MCF 10A (cell line): ENCODE measurements at regions of chr11 and their contacts with region 1.

Region 1: DNA sequence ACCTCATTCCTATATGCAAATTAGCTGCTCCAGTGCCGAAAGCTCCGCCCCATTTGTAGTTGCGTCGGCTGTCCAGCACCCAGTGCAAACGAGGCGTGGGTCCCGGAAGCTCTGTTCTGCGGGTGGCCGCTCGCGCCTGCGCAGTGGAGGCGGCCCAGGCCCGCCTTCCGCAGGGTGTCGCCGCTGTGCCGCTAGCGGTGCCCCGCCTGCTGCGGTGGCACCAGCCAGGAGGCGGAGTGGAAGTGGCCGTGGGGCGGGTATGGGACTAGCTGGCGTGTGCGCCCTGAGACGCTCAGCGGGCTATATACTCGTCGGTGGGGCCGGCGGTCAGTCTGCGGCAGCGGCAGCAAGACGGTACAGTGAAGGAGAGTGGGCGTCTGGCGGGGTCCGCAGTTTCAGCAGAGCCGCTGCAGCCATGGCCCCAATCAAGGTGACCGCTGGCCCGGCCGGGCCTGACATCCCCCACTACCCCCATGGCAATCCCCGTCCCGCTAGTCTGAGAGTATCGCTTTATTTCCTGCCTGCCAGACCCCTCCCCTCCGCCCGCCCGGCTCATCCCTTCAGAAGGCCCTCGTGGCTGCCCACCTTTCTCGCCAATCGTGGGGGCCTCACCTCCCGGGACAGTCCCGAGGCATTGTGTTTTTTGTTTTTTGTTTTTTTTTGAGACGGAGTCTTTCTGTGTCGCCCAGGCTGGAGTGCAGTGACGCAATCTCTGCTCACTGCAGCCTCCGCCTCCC is at the start of gene PRDX5:
- DNase-seq: peak; percentile 96
- H3K4me3 Mint-ChIP-seq: peak within 1 kb of the TSS; percentile 86
- H3K27ac Mint-ChIP-seq: peak within 1 kb of the TSS; percentile 93
- H3K4me1 Mint-ChIP-seq: peaks cover 36% of the 10 kb centered on the region
- H3K27me3 Mint-ChIP-seq: no peaks in the 10 kb centered on the region
- CTCF ChIP-seq: no peak
- total RNA-seq, gene PRDX5: 274 and 302 TPM in 2 replicates

Region 2: DNA sequence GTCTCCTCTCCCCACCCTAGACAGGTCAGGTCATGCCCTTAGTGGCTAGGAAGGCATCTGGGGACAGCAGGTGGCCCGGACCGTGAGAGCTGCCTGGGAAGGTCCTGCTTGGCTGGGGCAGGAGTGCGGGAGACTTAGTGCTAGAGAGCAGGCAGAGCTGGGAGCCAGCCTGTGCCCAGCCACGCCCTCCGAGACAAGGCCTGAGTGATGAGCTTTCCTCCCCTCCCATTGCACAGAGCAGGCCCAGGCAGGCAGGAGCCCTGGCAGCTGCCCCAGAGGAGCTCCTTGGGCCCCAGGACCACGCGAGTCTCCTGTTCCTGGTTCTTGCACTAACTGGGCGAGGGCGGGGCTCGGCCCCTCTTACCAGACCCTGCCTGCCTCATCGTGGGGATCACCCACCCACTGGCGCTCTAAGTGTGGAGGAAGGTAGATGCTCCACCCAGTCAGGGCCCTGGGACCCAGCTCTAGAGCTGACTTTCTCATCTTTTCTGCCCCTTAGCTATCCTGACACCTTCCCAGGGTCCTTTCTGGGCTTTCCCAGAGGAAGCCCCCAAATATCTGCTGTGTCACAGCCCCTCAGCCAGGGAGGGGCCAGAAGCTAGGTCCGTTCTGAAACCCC is 197.1 kb before region 1 on chr11:
- CTCF ChIA-PET with region 1: no interaction called
- POLR2A ChIA-PET with region 1: no interaction called
- intact Hi-C with region 1: no loop called
- DNase-seq: peak; percentile 83
- H3K4me3 Mint-ChIP-seq: peak overlapping the region; percentile 1
- H3K27ac Mint-ChIP-seq: no peak overlapping the region
- H3K4me1 Mint-ChIP-seq: peaks cover 18% of the 10 kb centered on the region
- H3K27me3 Mint-ChIP-seq: no peaks in the 10 kb centered on the region
- CTCF ChIP-seq: no peak

Region 3: DNA sequence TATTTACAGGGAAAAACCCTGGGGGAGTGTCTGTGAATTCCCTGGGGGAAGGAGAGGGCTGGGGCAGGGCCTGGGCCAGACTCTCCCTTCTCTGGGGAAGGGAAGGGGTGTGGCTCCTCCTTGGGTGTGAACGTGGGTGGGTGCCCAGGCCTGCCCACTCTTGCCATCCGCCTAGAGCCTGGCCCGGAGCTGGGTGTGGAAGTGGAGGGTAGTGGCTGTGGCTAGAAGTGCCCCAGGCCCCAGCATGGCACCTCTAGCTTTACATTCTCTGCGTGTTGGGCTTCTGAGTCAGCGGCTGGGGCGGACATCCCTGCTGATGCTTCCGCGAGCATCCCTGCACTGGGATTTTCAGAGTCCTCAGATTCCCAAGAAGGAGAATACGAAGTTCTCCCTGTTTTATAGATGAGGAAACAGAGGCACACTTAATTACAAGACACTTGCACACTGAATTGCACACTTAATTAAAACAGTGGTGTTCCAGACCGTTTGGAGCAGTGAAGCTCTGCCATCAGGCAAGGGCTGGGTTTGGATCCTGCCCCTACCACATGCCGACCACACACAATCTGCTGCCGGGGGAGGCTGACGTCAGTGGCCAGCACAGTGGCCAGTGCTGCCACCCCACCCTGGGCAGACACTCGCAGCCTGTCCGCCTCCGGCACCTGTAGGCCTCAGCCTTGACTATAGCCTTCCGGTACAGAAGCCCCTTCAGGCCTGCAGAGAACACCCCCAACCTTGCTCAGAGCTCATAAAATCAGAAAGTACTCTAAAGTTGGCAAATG is 41.3 kb before region 1 on chr11:
- CTCF ChIA-PET with region 1: interaction called, 3 read pairs
- POLR2A ChIA-PET with region 1: interaction called, 42 read pairs
- intact Hi-C with region 1: no loop called
- DNase-seq: peak; percentile 90
- H3K4me3 Mint-ChIP-seq: peak overlapping the region; percentile 14
- H3K27ac Mint-ChIP-seq: peak overlapping the region; percentile 79
- H3K4me1 Mint-ChIP-seq: peaks cover 4% of the 10 kb centered on the region
- H3K27me3 Mint-ChIP-seq: no peaks in the 10 kb centered on the region
- CTCF ChIP-seq: no peak

Region 4: GRCh38 chr11:64331557-64332371 is 13.6 kb after region 1 on chr11:
- CTCF ChIA-PET with region 1: interaction called, 95 read pairs
- POLR2A ChIA-PET with region 1: interaction called, 285 read pairs
- intact Hi-C with region 1: loop called (anchors 1 kb)
- DNase-seq: peak; percentile 98
- H3K4me3 Mint-ChIP-seq: peak overlapping the region; percentile 8
- H3K27ac Mint-ChIP-seq: peak overlapping the region; percentile 61
- H3K4me1 Mint-ChIP-seq: peaks cover 20% of the 10 kb centered on the region
- H3K27me3 Mint-ChIP-seq: no peaks in the 10 kb centered on the region
- CTCF ChIP-seq: peak; percentile 79

Region 5: GRCh38 chr11:64348611-64349484 is 30.7 kb after region 1 on chr11:
- CTCF ChIA-PET with region 1: interaction called, 148 read pairs
- POLR2A ChIA-PET with region 1: interaction called, 285 read pairs
- intact Hi-C with region 1: no loop called
- DNase-seq: no peak
- H3K4me3 Mint-ChIP-seq: no peak overlapping the region
- H3K27ac Mint-ChIP-seq: no peak overlapping the region
- H3K4me1 Mint-ChIP-seq: peaks cover 13% of the 10 kb centered on the region
- H3K27me3 Mint-ChIP-seq: no peaks in the 10 kb centered on the region
- CTCF ChIP-seq: no peak